ENCODE measurements at regions of chr6 and their contacts with region 1.

Region 1: DNA sequence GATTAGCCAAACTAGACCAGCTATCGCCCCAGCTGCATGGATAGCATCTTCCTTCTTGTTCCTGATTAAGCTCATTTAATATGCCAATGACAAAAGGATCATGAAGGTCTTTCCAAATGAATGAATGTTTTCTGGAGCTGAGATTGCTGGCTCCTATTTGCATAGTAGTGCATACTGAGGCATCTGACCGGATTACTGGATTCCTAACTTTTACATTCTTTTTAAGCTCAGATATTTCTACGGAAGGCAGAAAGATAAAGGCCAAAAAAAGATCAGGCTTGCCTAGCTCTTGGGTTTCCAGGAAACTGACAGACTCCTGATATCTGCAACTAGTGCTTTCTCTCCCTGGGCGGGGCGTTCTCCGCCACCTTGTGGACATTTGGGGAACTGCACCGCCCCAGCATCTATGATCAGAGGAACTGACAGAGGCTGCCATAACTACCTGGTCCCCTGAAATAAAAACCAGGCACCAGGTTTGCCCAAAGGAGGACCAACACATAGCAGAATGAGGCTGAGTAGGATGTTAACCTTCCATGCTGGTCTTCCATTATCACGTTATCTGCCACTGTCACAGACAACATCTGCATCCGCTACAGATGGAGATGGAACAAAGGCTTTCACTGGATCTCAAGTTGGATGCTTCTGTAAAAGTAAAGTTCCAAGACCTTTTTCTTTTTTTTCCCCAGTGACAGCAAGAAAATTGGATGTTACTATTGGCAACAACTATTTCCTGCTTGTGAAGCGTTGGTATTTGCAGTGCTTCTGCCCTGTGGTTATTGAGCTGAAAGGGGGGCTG is 33.2 kb downstream of the NT5E start:
- DNase-seq: peak; percentile 70
- H3K4me3 Mint-ChIP-seq: no peak overlapping the region
- H3K27ac Mint-ChIP-seq: no peak overlapping the region
- H3K4me1 Mint-ChIP-seq: peaks cover 17% of the 10 kb centered on the region
- H3K27me3 Mint-ChIP-seq: no peaks in the 10 kb centered on the region

Region 2: GRCh38 chr6:85354761-85355618 is 128.1 kb before region 1 on chr6:
- intact Hi-C with region 1: loop called (anchors 1 kb)
- DNase-seq: peak; percentile 43
- H3K4me3 Mint-ChIP-seq: no peak overlapping the region
- H3K27ac Mint-ChIP-seq: no peak overlapping the region
- H3K4me1 Mint-ChIP-seq: no peaks in the 10 kb centered on the region
- H3K27me3 Mint-ChIP-seq: no peaks in the 10 kb centered on the region

Region 3: GRCh38 chr6:85389151-85389797 is 93.8 kb before region 1 on chr6:
- intact Hi-C with region 1: loop called (anchors 1 kb)
- DNase-seq: no peak
- H3K4me3 Mint-ChIP-seq: peak overlapping the region; percentile 3
- H3K27ac Mint-ChIP-seq: peak overlapping the region; percentile 36
- H3K4me1 Mint-ChIP-seq: peaks cover 34% of the 10 kb centered on the region
- H3K27me3 Mint-ChIP-seq: peaks cover 5% of the 10 kb centered on the region

Region 4: DNA sequence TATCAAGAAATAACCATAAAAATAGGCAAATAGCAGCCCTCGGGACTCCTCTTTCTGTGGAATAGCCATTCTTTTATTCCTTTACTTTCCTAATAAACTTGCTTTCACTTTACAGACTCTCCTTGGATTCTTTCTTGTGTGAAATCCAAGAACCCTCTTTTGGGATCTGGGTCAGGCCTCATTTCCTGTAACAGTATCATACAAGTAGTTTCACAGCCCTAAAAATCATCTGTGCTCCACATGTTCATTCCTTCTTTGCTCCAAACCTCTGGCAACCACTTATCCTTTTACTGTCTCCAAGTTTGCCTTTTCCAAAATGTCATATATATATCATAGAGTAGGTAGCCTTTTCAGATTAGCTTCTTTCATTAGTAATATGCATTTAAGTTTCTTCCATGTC is 46.7 kb before region 1 on chr6:
- intact Hi-C with region 1: no loop called
- DNase-seq: no peak
- H3K4me3 Mint-ChIP-seq: no peak overlapping the region
- H3K27ac Mint-ChIP-seq: no peak overlapping the region
- H3K4me1 Mint-ChIP-seq: no peaks in the 10 kb centered on the region
- H3K27me3 Mint-ChIP-seq: peaks cover 2% of the 10 kb centered on the region

Region 5: DNA sequence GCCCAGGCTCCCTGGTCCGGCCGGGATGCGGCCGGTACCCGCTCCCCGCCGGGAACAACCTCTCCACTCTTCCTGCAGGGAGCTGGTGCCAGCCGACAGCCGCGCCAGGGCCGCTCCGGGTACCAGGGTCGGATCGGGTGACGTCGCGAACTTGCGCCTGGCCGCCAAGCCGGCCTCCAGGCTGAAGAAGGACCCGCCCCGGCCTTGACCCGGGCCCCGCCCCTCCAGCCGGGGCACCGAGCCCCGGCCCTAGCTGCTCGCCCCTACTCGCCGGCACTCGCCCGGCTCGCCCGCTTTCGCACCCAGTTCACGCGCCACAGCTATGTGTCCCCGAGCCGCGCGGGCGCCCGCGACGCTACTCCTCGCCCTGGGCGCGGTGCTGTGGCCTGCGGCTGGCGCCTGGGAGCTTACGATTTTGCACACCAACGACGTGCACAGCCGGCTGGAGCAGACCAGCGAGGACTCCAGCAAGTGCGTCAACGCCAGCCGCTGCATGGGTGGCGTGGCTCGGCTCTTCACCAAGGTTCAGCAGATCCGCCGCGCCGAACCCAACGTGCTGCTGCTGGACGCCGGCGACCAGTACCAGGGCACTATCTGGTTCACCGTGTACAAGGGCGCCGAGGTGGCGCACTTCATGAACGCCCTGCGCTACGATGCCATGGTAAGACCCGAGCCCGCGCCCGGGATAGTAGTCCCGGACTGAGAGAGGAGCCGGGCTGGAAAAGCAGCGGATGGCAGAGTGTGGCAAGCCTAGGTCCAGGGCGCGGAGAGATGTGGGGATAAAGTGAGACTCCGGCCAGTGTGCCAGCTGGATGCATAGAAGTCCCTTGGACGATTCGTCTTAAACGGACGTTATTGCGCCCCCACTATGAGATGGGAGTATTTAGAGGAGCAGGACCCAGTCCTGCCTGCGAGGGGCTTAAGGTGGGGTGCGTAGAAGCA is 33.0 kb before region 1 on chr6 and contains the start of gene NT5E:
- intact Hi-C with region 1: loop called (anchors 1 kb)
- DNase-seq: peak; percentile 37
- H3K4me3 Mint-ChIP-seq: peak within 1 kb of the TSS; percentile 98
- H3K27ac Mint-ChIP-seq: peak within 1 kb of the TSS; percentile 89
- H3K4me1 Mint-ChIP-seq: peaks cover 66% of the 10 kb centered on the region
- H3K27me3 Mint-ChIP-seq: peaks cover 31% of the 10 kb centered on the region
- total RNA-seq, gene NT5E: 12.5 and 15.2 TPM in 2 replicates

Region 6: GRCh38 chr6:85468261-85468660 is 14.8 kb before region 1 on chr6:
- intact Hi-C with region 1: loop called (anchors 1 kb)
- DNase-seq: no peak
- H3K4me3 Mint-ChIP-seq: no peak overlapping the region
- H3K27ac Mint-ChIP-seq: no peak overlapping the region
- H3K4me1 Mint-ChIP-seq: peaks cover 41% of the 10 kb centered on the region
- H3K27me3 Mint-ChIP-seq: peaks cover 2% of the 10 kb centered on the region

Region 7: GRCh38 chr6:85516168-85516567 is 33.1 kb after region 1 on chr6:
- intact Hi-C with region 1: no loop called
- DNase-seq: no peak
- H3K4me3 Mint-ChIP-seq: no peak overlapping the region
- H3K27ac Mint-ChIP-seq: no peak overlapping the region
- H3K4me1 Mint-ChIP-seq: no peaks in the 10 kb centered on the region
- H3K27me3 Mint-ChIP-seq: no peaks in the 10 kb centered on the region

Region 8: DNA sequence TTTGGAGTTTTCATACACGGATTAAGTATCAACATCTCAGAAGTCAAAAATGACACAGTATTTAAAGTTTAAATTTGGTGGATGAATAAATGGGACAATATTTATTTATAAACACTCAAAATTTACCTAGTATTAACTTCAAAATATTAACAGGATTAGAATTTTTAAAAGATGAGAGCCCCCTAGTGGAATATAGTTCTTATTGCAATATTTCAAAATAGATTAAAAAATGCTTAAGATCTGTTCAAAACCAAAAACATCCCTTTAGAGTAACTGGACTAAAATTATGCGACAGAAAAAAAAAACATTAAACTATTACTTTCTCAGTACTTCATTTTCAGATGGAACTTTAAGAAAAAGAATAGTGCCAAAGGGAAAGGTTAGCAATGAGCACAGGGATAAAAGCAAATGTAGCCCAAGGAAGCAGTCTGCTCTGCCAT is 54.0 kb after region 1 on chr6:
- intact Hi-C with region 1: loop called (anchors 1 kb)
- DNase-seq: no peak
- H3K4me3 Mint-ChIP-seq: no peak overlapping the region
- H3K27ac Mint-ChIP-seq: no peak overlapping the region
- H3K4me1 Mint-ChIP-seq: no peaks in the 10 kb centered on the region
- H3K27me3 Mint-ChIP-seq: no peaks in the 10 kb centered on the region

Measured in activated T-helper 1 cell treated with anti-CD3 and anti-CD28 coated beads, Interleukin-12 subunit alpha, Interleukin-12 subunit beta, Interleukin-2, Interleukin-4 antibody, amounts not matched to agents 30 ng/mL and 10 ng/mL and 1 ng/mL, durations not matched to agents 14 hours and 24 hours and 36 hours (primary cell).